B cell (primary cell): ENCODE measurements at regions of chr9 and their contacts with region 1.

Region 1: GRCh38 chr9:123544007-123544827 is 188.2 kb downstream of the CRB2 start:
- DNase-seq: peak; percentile 55
- ATAC-seq: no peak
- H3K4me3 ChIP-seq: no peak overlapping the region
- H3K4me3 Mint-ChIP-seq: no peak overlapping the region
- H3K27ac ChIP-seq: no peak overlapping the region
- H3K27ac Mint-ChIP-seq: no peak overlapping the region
- H3K4me1 ChIP-seq: no peaks in the 10 kb centered on the region
- H3K4me1 Mint-ChIP-seq: no peaks in the 10 kb centered on the region
- H3K27me3 ChIP-seq: no peaks in the 10 kb centered on the region
- H3K27me3 Mint-ChIP-seq: no peaks in the 10 kb centered on the region
- CTCF ChIP-seq: peak; percentile 97

Region 2: GRCh38 chr9:123997665-123998277 is 453.6 kb after region 1 on chr9:
- CTCF ChIA-PET with region 1: no interaction called
- POLR2A ChIA-PET with region 1: no interaction called
- intact Hi-C with region 1: loop called (anchors 2 kb)
- DNase-seq: peak; percentile 81
- ATAC-seq: peak; percentile 66
- H3K4me3 ChIP-seq: peak overlapping the region in 3 of 5 experiments; percentile 13 to 66 (median 22)
- H3K4me3 Mint-ChIP-seq: peak overlapping the region; percentile 86
- H3K27ac ChIP-seq: no peak overlapping the region
- H3K27ac Mint-ChIP-seq: peak overlapping the region; percentile 38
- H3K4me1 ChIP-seq: peaks cover 42 to 47% of the 10 kb centered on the region in 2 donors
- H3K4me1 Mint-ChIP-seq: peaks cover 42% of the 10 kb centered on the region
- H3K27me3 ChIP-seq: peaks cover 0 to 66% (median 43%) of the 10 kb centered on the region in 4 experiments
- H3K27me3 Mint-ChIP-seq: peaks cover 69% of the 10 kb centered on the region
- CTCF ChIP-seq: no peak

Region 3: DNA sequence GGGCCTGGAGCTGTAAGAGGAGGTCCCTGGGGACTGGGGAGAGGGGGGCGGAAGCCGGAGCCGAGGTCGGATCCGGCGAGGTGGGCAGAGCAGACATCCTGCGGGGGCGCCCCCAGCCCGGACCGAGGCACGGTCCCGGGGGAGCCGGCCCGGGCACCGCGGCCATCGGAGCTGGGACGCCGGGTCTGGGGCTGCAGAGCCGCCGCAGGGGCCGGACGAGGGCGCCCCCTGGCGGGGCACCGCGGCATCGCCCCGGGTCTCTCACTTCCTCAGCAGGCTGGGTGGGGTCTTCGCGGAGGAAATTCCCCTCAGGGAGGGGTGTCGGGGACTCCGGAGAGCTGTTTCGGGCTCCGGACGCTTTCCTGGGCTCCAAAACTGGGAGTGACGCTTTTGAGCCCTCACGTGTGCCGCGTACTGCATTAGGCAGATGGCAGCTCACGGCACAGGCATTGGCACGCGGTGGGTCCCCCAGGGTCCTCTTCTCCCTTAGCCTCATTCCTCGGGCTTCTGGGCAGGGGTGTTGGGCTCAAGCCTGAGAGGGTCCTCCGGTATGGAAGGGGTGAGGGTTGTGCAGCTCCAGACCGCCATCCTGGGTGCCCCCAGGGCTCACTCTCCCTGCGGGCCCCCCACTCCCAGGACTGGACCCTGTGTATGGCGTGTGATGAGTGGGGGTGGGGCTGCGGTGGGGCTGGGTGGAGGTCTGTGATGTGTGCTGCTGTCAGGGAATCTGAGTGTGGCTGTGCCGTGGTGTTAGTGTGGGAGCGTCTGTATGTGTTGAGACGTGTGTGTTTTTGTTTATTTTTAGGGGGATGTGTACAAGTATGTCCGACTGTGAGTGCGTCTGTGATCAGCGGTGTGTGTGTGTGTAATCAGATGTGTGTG is 497.0 kb after region 1 on chr9:
- CTCF ChIA-PET with region 1: interaction called, 80 read pairs
- POLR2A ChIA-PET with region 1: no interaction called
- intact Hi-C with region 1: no loop called
- DNase-seq: peak; percentile 67
- ATAC-seq: peak; percentile 63
- H3K4me3 ChIP-seq: peak overlapping the region in 4 of 5 experiments; percentile 24 to 60 (median 44)
- H3K4me3 Mint-ChIP-seq: peak overlapping the region; percentile 81
- H3K27ac ChIP-seq: no peak overlapping the region
- H3K27ac Mint-ChIP-seq: no peak overlapping the region
- H3K4me1 ChIP-seq: peaks cover 21 to 24% of the 10 kb centered on the region in 2 donors
- H3K4me1 Mint-ChIP-seq: peaks cover 26% of the 10 kb centered on the region
- H3K27me3 ChIP-seq: peaks cover 0 to 60% (median 29%) of the 10 kb centered on the region in 4 experiments
- H3K27me3 Mint-ChIP-seq: peaks cover 42% of the 10 kb centered on the region
- CTCF ChIP-seq: peak; percentile 92

Region 4: DNA sequence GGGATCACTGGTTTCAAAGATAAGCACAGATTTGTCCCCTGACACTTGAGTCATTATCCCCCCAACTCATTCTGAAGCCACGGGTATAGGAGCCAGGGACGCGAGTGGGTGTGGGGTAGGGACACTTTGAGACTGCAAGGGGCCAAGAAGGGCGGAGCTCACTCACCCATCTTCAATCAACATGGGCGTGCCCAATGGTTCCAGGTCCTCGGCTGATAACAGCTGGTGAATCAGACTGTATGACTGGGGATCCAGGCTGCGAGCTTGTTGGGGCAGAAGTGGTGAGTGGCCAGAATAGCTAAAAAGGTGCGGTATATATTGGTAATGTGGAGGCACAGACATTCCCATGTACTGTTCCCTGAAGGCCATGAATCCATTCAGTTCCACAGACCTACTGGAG is 993.7 kb after region 1 on chr9:
- CTCF ChIA-PET with region 1: interaction called, 10 read pairs
- POLR2A ChIA-PET with region 1: no interaction called
- intact Hi-C with region 1: no loop called
- DNase-seq: no peak
- ATAC-seq: no peak
- H3K4me3 ChIP-seq: no peak overlapping the region
- H3K4me3 Mint-ChIP-seq: no peak overlapping the region
- H3K27ac ChIP-seq: no peak overlapping the region
- H3K27ac Mint-ChIP-seq: no peak overlapping the region
- H3K4me1 ChIP-seq: no peaks in the 10 kb centered on the region
- H3K4me1 Mint-ChIP-seq: no peaks in the 10 kb centered on the region
- H3K27me3 ChIP-seq: no peaks in the 10 kb centered on the region
- H3K27me3 Mint-ChIP-seq: no peaks in the 10 kb centered on the region
- CTCF ChIP-seq: no peak